RWPE1 (cell line): ENCODE measurements at regions of chr19 and their contacts with region 1.

Region 1: DNA sequence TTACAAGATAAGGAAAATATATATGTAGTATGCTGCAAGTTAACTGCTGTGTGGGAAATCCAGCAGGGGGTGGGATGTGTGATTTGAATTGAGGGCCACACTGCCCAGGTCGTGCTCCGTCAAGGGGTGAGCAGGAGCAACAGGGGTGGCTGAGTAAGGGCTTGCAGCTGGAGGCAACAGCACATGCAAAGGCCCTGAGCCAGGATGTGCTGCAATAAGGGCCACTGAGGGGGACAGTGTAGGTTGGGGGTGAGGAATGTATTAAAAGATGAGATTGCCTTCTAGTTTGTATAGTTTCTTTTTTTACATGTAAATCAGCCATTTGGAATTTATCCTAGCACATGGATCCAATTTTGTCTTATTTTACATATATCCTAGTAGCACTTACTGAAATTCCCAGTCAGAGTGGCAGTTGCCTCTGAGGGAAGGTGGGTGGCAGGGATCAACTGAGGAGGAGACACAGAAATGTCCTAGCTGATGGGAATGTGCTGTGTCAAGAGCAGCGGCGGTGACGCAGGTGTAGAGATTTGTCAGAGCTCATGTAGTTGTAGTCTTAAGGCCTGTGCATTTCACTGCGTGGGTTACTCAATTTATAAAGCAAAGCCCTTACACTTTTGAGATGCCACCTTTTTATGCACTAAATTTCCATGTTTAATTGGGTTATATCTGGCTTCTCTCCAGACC is 5.4 kb upstream of the RBM42 start:
- DNase-seq: no peak
- H3K27ac ChIP-seq: peak overlapping the region; percentile 17; the same call in 1 of the 2 replicates
- CTCF ChIP-seq: no peak

Region 2: GRCh38 chr19:35525873-35526272 is 97.6 kb before region 1 on chr19:
- CTCF ChIA-PET with region 1: interaction called, 11 read pairs
- POLR2A ChIA-PET with region 1: no interaction called
- DNase-seq: no peak
- H3K27ac ChIP-seq: no peak overlapping the region
- CTCF ChIP-seq: no peak